CD4-positive, alpha-beta memory T cell (primary cell): ENCODE measurements at regions of chr4 and their contacts with region 1.

Region 1: DNA sequence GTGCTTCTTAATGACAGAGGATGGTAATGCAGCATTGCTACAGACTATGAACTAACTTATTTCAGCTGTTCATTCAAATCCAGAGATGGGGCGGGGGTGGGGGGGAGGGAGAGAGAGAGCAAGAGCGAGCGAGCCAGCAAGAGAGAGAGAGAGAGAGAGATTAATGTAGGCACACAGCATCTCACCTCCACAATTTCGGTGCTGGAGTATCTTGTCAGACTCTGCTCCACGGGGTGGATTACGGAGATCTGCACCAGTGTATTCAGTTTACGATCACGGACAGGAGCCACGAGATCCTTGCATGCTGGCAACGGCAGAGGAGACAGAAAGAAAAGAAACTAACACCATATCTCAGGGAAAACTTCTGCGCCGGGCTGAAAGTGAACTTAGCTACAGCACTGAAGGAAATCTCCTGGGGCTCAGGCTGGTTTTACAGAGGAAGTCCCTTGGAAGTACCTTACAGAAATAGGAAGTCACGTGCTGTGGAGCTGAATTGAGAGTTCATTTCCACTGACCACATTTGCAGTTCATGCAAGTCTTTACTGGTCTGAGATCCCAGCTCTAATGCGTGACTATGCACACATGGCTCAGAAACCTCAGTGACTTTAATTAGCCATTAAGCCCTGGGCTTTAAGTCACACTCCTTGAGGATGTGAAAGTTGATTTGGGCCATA is 440.9 kb downstream of the INPP4B start:
- DNase-seq: peak; percentile 64 to 81 (median 68)
- H3K4me3 ChIP-seq: peak overlapping the region; percentile 69 to 70
- H3K4me3 Mint-ChIP-seq: peak overlapping the region; percentile 95 to 100 (median 98)
- H3K27ac ChIP-seq: peak overlapping the region; percentile 72
- H3K27ac Mint-ChIP-seq: peak overlapping the region; percentile 91 to 98 (median 95)
- H3K4me1 ChIP-seq: peaks cover 38% of the 10 kb centered on the region
- H3K4me1 Mint-ChIP-seq: peaks cover 26 to 72% (median 36%) of the 10 kb centered on the region in 4 donors
- H3K27me3 ChIP-seq: no peaks in the 10 kb centered on the region
- H3K27me3 Mint-ChIP-seq: no peaks in the 10 kb centered on the region

Region 2: DNA sequence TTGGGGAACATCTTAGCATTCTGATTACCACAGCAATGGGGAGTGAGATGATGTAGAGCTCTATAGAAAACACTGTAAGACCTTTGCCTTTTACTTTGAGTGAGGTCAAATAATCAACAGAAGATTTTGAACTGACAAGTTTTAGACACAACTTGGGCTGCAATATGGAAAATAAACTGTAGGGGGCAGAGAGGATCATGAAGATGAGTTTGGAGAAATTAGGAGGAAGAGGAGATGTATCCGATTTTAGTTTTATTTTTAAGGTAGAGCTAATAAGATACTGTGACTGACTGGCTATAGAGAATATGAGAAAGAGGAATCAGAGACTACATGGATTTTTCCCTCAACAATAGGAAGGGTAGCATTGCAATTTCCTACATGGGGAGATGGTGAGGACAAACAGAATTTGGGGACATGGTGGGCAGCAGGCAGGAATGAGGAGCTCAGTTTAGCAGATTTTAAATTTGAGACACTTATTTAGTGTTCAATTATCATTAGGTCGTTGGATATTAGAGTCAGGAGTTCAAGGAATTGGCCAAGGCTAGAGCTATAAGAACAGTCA is 122.2 kb before region 1 on chr4:
- CTCF ChIA-PET with region 1: interaction called, 12 read pairs
- POLR2A ChIA-PET with region 1: interaction called, 3 read pairs
- intact Hi-C with region 1: loop called (anchors 5 kb)
- DNase-seq: peak; percentile 16 to 47 (median 43)
- H3K4me3 ChIP-seq: no peak overlapping the region
- H3K4me3 Mint-ChIP-seq: no peak overlapping the region
- H3K27ac ChIP-seq: no peak overlapping the region
- H3K27ac Mint-ChIP-seq: no peak overlapping the region
- H3K4me1 ChIP-seq: peaks cover 63% of the 10 kb centered on the region
- H3K4me1 Mint-ChIP-seq: peaks cover 16 to 23% (median 20%) of the 10 kb centered on the region in 4 donors
- H3K27me3 ChIP-seq: no peaks in the 10 kb centered on the region
- H3K27me3 Mint-ChIP-seq: no peaks in the 10 kb centered on the region

Region 3: GRCh38 chr4:142331132-142331531 is 74.0 kb before region 1 on chr4:
- CTCF ChIA-PET with region 1: no interaction called
- POLR2A ChIA-PET with region 1: no interaction called
- intact Hi-C with region 1: no loop called
- DNase-seq: no peak
- H3K4me3 ChIP-seq: no peak overlapping the region
- H3K4me3 Mint-ChIP-seq: no peak overlapping the region
- H3K27ac ChIP-seq: no peak overlapping the region
- H3K27ac Mint-ChIP-seq: peak overlapping the region in 1 of 7 donors; percentile 7
- H3K4me1 ChIP-seq: peaks cover 73% of the 10 kb centered on the region
- H3K4me1 Mint-ChIP-seq: peaks cover 61 to 90% (median 68%) of the 10 kb centered on the region in 4 donors
- H3K27me3 ChIP-seq: no peaks in the 10 kb centered on the region
- H3K27me3 Mint-ChIP-seq: no peaks in the 10 kb centered on the region

Region 4: DNA sequence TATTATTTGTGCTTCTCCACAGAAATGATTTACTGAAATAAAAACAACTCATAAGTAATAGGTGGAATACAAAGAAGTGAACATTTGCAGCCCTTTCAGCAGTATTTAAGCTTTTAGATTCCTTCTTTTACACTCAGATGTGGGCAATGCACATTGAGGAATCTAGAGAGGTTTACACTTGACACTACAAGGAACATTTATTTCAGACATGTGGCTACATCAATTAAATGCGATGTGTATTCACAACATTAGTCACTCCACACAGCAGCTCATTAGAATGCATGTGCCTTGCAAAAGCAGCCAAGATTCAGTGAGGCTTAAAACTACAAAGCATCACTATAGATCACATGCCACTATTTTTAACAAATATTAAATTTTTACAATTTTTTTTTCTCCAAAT is 39.8 kb before region 1 on chr4:
- CTCF ChIA-PET with region 1: interaction called, 6 read pairs
- POLR2A ChIA-PET with region 1: interaction called, 122 read pairs
- intact Hi-C with region 1: no loop called
- DNase-seq: no peak
- H3K4me3 ChIP-seq: no peak overlapping the region
- H3K4me3 Mint-ChIP-seq: peak overlapping the region in 5 of 8 donors; percentile 22 to 69 (median 49)
- H3K27ac ChIP-seq: no peak overlapping the region
- H3K27ac Mint-ChIP-seq: peak overlapping the region in 6 of 7 donors; percentile 6 to 86 (median 72)
- H3K4me1 ChIP-seq: peaks cover 87% of the 10 kb centered on the region
- H3K4me1 Mint-ChIP-seq: peaks cover 67 to 84% (median 74%) of the 10 kb centered on the region in 4 donors
- H3K27me3 ChIP-seq: no peaks in the 10 kb centered on the region
- H3K27me3 Mint-ChIP-seq: no peaks in the 10 kb centered on the region

Region 5: DNA sequence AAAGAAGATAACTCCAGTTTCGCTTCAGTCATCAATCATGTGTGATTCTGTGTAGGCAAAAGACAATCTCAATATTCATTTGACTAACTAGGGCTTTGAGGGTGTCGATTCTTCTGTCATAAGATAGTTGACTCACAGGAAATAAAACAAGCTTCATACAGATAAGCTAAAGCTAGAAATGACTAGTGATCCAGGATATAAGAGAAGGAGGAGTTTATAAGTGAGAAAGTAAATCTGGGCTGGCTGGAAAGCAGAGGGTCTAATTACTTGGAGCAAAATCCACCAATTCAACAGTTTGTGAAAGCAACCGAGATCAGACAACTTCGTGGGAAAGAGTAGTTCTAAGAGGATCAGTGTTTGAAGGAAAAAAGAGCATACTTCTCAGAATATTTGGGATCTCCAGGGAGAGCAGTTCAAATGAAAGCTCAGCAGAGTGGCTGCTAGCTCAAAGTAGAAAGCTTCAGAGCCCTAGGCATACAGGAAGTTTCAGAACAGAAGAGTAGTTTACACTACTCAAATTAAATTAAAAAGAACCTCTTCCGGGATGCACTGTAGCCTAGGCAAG is 11.6 kb after region 1 on chr4:
- CTCF ChIA-PET with region 1: interaction called, 21 read pairs
- POLR2A ChIA-PET with region 1: interaction called, 105 read pairs
- intact Hi-C with region 1: loop called (anchors 1 kb)
- DNase-seq: peak; percentile 39 to 62 (median 48)
- H3K4me3 ChIP-seq: peak overlapping the region; percentile 11 to 33
- H3K4me3 Mint-ChIP-seq: peak overlapping the region; percentile 71 to 90 (median 84)
- H3K27ac ChIP-seq: peak overlapping the region; percentile 70
- H3K27ac Mint-ChIP-seq: peak overlapping the region; percentile 77 to 95 (median 92)
- H3K4me1 ChIP-seq: peaks cover 42% of the 10 kb centered on the region
- H3K4me1 Mint-ChIP-seq: peaks cover 29 to 48% (median 33%) of the 10 kb centered on the region in 4 donors
- H3K27me3 ChIP-seq: no peaks in the 10 kb centered on the region
- H3K27me3 Mint-ChIP-seq: no peaks in the 10 kb centered on the region

Region 6: DNA sequence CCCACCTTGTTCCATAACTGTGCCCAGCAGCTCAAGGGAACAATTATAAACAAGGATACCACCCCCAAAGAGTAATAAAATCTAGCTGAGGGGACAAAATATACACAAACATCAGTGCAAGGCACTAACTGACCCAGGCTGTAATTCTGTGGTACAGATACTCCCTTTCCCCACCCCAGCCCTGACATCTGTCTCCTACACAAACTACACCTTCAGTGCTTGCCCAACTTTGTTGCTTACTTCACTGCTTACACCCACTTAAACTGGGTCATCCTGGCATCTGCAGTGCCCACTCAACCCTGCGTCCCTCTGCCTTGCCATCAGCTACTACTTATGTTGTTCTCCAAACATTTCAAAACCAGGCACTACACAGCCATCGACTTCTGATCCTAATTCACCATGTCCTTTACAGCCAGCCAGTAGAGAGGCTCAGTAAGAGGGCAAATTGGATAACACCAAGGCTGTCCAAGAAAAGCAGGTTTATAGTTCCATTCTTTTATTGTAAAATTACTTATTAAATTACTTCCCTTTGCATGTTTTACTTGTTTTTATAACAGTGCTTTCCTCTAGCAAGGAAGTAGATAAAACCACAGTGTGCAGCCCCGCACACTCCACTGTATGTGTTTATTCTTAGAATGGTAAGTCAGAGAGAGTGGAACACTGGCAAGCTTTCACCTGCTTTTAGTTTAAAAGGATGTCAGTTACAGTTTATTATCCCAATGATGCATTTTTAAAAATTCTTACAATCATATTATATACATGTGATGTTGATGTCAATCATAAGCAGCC is 291.4 kb after region 1 on chr4:
- CTCF ChIA-PET with region 1: interaction called, 5 read pairs
- POLR2A ChIA-PET with region 1: interaction called, 33 read pairs
- intact Hi-C with region 1: loop called (anchors 5 kb)
- DNase-seq: peak in 4 of 5 donors; percentile 15 to 26 (median 22)
- H3K4me3 ChIP-seq: peak overlapping the region in 1 of 2 donors; percentile 22
- H3K4me3 Mint-ChIP-seq: peak overlapping the region in 7 of 8 donors; percentile 59 to 86 (median 73)
- H3K27ac ChIP-seq: peak overlapping the region; percentile 34
- H3K27ac Mint-ChIP-seq: peak overlapping the region in 6 of 7 donors; percentile 89 to 98 (median 95)
- H3K4me1 ChIP-seq: peaks cover 69% of the 10 kb centered on the region
- H3K4me1 Mint-ChIP-seq: peaks cover 53 to 69% (median 58%) of the 10 kb centered on the region in 4 donors
- H3K27me3 ChIP-seq: no peaks in the 10 kb centered on the region
- H3K27me3 Mint-ChIP-seq: no peaks in the 10 kb centered on the region

Region 7: GRCh38 chr4:142719854-142720541 is 314.8 kb after region 1 on chr4:
- CTCF ChIA-PET with region 1: interaction called, 7 read pairs
- POLR2A ChIA-PET with region 1: interaction called, 7 read pairs
- intact Hi-C with region 1: loop called (anchors 5 kb)
- DNase-seq: peak in 4 of 5 donors; percentile 54 to 60 (median 57)
- H3K4me3 ChIP-seq: no peak overlapping the region
- H3K4me3 Mint-ChIP-seq: peak overlapping the region in 5 of 8 donors; percentile 19 to 62 (median 49)
- H3K27ac ChIP-seq: no peak overlapping the region
- H3K27ac Mint-ChIP-seq: peak overlapping the region in 5 of 7 donors; percentile 36 to 77 (median 69)
- H3K4me1 ChIP-seq: peaks cover 14% of the 10 kb centered on the region
- H3K4me1 Mint-ChIP-seq: peaks cover 11 to 26% (median 13%) of the 10 kb centered on the region in 4 donors
- H3K27me3 ChIP-seq: no peaks in the 10 kb centered on the region
- H3K27me3 Mint-ChIP-seq: peaks cover 0 to 1% of the 10 kb centered on the region in 2 donors

Region 8: DNA sequence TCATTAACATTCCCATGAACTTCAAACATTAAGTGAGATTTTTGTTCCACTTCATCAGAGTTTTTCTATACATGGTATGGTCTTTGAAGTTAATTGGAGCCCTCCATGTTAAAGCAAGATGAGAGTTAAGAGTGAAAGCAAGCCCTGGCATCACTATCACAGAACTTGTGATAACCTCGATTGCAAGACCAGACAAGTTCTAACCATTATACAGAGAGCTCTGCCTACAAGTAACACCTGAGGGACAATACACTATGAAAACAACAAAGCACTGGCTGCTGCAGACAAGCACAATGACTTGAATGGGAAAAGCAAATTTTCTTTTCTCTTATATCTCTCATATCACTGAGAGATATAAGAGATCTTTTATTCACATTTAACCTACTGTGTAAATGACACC is 1861.9 kb after region 1 on chr4:
- CTCF ChIA-PET with region 1: no interaction called
- POLR2A ChIA-PET with region 1: no interaction called
- intact Hi-C with region 1: no loop called
- DNase-seq: no peak
- H3K4me3 ChIP-seq: no peak overlapping the region
- H3K4me3 Mint-ChIP-seq: no peak overlapping the region
- H3K27ac ChIP-seq: no peak overlapping the region
- H3K27ac Mint-ChIP-seq: no peak overlapping the region
- H3K4me1 ChIP-seq: no peaks in the 10 kb centered on the region
- H3K4me1 Mint-ChIP-seq: no peaks in the 10 kb centered on the region
- H3K27me3 ChIP-seq: no peaks in the 10 kb centered on the region
- H3K27me3 Mint-ChIP-seq: peaks cover 0 to 2% of the 10 kb centered on the region in 2 donors